Panc1 (cell line): ENCODE measurements at regions of chr12 and their contacts with region 1.

Region 1: GRCh38 chr12:15856097-15856982 is 25.8 kb upstream of the STRAP start:
- DNase-seq: peak; percentile 60
- ATAC-seq: peak; percentile 78
- H3K4me3 ChIP-seq: no peak overlapping the region
- H3K27ac ChIP-seq: no peak overlapping the region
- H3K4me1 ChIP-seq: no peaks in the 10 kb centered on the region
- H3K27me3 ChIP-seq: no peaks in the 10 kb centered on the region
- CTCF ChIP-seq: peak; percentile 64; the same call in 1 of the 2 replicates

Region 2: DNA sequence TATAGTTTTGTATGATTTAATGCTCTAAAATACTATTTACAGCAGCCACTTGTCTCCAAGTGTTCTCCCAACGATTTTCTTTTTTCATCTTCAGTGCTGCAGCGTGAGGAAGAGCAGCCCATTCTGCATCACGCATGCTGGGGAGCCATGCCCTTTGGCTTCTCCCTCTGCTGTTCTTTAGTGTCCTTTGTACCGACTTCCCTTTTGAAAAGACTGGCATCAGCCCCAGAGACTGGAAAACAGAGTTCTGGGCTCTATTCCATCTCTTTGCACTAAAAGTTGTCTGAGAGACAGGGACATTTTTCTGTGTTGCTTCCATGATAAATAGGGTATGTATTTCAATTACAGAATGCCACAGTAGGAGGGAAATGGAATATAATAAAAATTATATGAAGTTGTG is 740.3 kb before region 1 on chr12:
- CTCF ChIA-PET with region 1: no interaction called
- POLR2A ChIA-PET with region 1: no interaction called
- in situ Hi-C with region 1: no loop called
- intact Hi-C with region 1: no loop called
- DNase-seq: no peak
- ATAC-seq: no peak
- H3K4me3 ChIP-seq: no peak overlapping the region
- H3K27ac ChIP-seq: no peak overlapping the region
- H3K4me1 ChIP-seq: no peaks in the 10 kb centered on the region
- H3K27me3 ChIP-seq: no peaks in the 10 kb centered on the region
- CTCF ChIP-seq: no peak

Region 3: DNA sequence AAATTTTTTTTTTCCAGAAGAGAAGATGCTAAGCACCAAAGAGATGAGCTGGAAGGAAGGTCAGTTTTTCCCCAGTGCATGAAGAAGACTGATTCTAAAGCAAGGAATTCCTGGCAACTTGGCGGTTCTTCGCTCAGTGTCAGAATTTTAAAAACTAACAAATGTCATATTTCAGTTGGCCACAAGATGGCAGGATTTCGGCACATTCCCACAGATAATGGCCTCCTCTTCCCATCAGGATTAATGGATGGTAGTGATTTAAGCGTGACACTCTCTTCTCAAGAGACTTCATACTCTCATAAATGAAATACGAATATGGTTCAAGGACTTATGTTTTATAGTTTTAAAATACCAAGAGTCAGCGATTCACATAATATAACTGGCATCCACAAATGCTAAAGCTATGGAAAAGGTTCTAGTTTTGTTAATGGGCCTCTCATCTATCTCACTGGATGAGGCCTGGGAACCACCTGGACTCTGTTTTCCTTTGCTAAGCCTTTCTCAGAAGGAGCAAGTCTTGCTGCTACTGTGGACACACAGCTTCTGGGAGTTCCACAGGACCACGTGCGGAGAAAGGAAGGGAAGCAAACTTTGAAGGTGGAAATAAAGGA is 580.1 kb before region 1 on chr12:
- CTCF ChIA-PET with region 1: no interaction called
- POLR2A ChIA-PET with region 1: no interaction called
- in situ Hi-C with region 1: no loop called
- intact Hi-C with region 1: loop called (anchors 5 kb)
- DNase-seq: peak; percentile 22
- ATAC-seq: peak; percentile 71
- H3K4me3 ChIP-seq: no peak overlapping the region
- H3K27ac ChIP-seq: no peak overlapping the region
- H3K4me1 ChIP-seq: no peaks in the 10 kb centered on the region
- H3K27me3 ChIP-seq: no peaks in the 10 kb centered on the region
- CTCF ChIP-seq: peak; percentile 67

Region 4: DNA sequence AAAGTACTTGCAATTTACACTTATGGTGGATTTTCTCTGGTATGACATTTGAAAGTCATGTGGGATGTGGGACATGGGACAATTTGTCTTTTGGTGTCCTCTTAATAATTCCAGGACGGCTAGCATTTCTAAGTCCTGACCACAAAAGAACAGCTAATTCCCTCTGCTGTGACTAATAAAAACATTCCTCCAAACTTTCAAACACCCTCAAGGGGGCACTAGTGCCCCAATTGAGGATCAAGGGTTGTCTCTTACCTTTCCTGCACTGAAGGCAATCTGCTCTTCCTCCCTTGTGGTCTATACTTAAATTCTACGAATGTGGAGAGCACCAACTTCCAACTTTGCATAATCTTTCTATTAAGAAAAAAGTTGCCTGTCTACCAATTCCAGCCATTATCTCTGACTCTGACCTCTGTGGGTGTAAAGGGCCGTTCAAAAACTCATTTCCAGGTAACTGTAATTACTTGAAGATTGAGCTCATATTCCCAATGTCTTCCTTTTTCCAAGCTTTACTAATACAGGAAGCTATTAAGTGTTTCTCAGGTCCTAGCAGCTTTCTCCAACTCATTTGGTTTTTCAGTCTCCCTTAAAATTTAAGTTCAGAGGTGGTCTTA is 323.9 kb before region 1 on chr12:
- CTCF ChIA-PET with region 1: interaction called, 5 read pairs
- POLR2A ChIA-PET with region 1: no interaction called
- in situ Hi-C with region 1: no loop called
- intact Hi-C with region 1: loop called (anchors 2 kb)
- DNase-seq: no peak
- ATAC-seq: no peak
- H3K4me3 ChIP-seq: no peak overlapping the region
- H3K27ac ChIP-seq: no peak overlapping the region
- H3K4me1 ChIP-seq: no peaks in the 10 kb centered on the region
- H3K27me3 ChIP-seq: no peaks in the 10 kb centered on the region
- CTCF ChIP-seq: peak; percentile 48

Region 5: DNA sequence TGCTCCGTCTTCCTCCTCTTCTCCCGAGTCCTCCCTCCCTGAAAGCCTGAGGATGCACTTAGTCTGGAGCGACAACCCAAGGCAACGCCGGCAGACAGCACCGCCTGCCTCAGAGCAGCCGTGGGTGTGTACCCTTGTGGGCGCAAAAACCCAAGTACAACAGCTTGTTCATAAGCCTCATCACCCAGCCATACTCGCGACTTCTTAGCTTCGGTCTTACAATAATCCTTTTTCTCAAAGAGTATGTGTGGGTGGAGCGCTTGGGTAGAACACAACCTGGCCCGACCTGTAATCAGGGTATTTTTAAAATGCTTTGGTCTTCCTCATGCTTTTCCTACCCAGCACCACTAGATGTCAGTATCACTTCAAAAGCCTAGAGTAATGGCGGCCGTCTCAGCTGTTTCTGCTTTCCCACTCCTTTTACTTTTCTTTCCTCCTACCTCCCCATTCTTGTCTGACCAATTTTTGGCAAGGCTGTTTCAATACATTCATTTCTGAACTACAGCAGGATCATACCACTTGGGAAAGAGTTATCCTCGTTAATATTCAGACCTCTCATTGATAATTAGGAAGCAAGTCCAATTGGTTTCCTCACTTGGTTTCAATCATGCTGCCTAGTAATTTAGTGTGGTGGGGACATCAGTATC is 266.0 kb before region 1 on chr12:
- CTCF ChIA-PET with region 1: interaction called, 3 read pairs
- POLR2A ChIA-PET with region 1: no interaction called
- in situ Hi-C with region 1: no loop called
- intact Hi-C with region 1: loop called (anchors 1 kb)
- DNase-seq: peak; percentile 53
- ATAC-seq: peak; percentile 95
- H3K4me3 ChIP-seq: peak overlapping the region; percentile 26 to 58
- H3K27ac ChIP-seq: peak overlapping the region; percentile 18; the same call in 1 of the 2 replicates
- H3K4me1 ChIP-seq: no peaks in the 10 kb centered on the region
- H3K27me3 ChIP-seq: no peaks in the 10 kb centered on the region
- CTCF ChIP-seq: peak; percentile 87

Region 6: GRCh38 chr12:15796493-15797141 is 59.7 kb before region 1 on chr12:
- CTCF ChIA-PET with region 1: no interaction called
- POLR2A ChIA-PET with region 1: no interaction called
- in situ Hi-C with region 1: no loop called
- intact Hi-C with region 1: loop called (anchors 5 kb)
- DNase-seq: no peak
- ATAC-seq: peak; percentile 91
- H3K4me3 ChIP-seq: no peak overlapping the region
- H3K27ac ChIP-seq: peak overlapping the region; percentile 54; the same call in 1 of the 2 replicates
- H3K4me1 ChIP-seq: peaks cover 14% of the 10 kb centered on the region; the same call in 1 of the 2 replicates
- H3K27me3 ChIP-seq: no peaks in the 10 kb centered on the region
- CTCF ChIP-seq: no peak